Right ventricle myocardium inferior (tissue), 1 donor: ENCODE measurements at regions of chr5 and their contacts with region 1.

Region 1: DNA sequence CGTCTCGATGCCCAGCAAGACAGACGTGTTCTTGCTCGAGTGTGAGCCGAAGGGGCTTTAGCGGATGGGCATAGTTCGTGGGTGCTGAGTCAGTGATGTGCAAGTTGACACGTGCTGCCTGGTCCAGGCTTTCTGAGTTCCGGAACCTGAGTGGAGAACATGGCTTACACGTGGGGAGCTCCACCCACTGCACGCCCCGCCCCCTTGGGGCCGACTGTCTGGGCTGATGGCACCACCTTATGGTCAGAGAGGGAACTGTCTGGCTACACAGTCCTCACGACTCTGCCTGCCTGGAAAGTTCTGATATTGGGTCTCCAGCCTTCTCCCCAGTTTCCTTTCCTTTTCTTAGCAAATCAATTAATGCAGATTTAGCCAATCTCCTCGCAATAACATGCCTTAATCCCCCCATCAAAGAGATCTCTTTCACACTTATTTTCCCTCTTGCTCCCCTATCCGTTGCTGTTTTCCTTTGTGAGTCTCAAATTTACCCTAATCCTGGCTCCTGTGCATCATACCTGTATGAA is 3.8 kb upstream of the STC2 start:
- DNase-seq: peak; percentile 92
- ATAC-seq: peak; percentile 86

Region 2: DNA sequence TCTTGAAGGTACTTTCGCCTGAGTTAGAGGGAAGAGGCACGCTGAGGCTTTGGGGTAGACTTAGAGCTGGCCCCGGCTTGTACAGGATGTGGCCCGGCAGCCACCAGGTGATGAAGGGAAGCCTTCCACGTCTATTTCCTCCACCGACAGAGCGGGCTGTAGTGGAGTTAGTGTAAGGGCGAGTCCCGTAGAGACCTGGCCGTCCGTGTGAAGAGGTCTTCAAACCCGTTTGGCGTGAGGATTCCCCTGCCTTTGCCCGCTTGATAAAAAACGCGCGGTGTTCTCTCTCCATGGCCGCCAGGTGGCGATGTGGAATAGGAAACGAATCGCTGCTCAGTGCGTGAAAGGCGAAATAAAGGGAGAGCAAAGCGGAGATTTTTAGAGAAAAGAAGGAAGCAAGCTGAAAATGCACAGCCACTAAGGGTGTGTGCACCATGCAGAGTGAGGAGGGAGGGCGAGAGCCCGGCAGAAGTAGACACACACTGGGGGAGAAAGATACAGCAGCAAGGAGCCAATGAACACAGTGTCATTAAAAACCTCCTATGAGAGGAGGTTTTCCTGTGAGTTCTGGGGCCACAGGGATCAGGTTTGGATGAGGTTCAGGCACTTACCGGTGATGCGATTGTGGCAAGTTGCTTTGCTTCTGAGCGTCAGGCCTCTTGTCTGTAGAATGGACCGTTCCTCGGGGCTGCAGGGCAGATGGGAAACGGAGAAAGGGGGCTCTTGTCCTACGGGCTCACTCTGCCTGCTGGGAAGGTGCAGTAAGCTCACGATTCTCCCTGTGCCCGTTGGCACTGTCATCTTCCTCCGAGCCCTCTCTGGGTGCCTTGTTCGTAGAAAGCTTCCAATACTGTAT is 38.0 kb before region 1 on chr5:
- intact Hi-C with region 1: loop called (anchors 1 kb)
- DNase-seq: peak; percentile 89
- ATAC-seq: peak; percentile 55

Region 3: GRCh38 chr5:173451031-173451430 is 119.0 kb after region 1 on chr5:
- intact Hi-C with region 1: loop called (anchors 5 kb)
- DNase-seq: no peak
- ATAC-seq: no peak